Activated CD4-positive, alpha-beta T cell treated with anti-CD3 and anti-CD28 coated beads, Interleukin-2, amount 10 ng/mL, durations not matched to agents 24 days and 14 days (primary cell): ENCODE measurements at regions of chr1 and their contacts with region 1.

Region 1: DNA sequence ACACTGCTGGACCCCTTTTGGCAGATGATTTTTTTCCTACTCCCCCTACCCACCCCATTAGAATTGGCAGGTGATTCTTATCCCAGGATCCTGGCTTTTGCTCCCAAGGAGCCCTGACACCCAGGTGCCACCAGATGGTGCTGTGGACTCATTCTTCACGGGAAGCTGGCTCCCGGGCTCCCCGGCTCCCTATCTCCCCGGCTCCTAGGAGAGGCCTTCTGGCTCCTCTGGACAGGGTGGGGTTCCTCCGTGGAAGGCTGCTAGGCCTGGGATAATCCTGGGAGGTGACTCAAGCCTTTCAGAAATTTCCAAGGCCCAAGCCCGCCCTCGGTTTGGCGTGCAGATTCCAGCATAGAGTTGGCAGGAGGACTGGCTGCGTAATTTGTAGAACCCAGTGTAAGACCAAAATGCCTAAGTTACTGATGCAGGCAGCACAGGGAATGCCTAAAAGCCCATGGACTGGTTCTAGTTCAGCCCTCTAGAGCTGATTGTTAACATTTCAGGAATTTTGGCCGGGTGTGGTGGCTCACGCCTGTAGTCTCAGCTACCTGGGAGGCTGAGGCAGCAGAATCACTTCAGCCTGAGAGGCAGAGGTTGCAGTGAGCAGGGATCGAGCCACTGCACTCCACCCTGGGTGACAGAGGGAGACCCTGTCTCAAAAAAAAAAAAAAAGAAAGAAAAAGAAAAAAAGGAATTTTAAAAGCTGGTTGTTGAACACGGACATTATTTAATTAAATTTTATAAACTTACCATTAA is 6.8 kb upstream of the BSDC1 start:
- DNase-seq: peak; percentile 85
- H3K4me3 Mint-ChIP-seq: no peak overlapping the region
- H3K27ac Mint-ChIP-seq: no peak overlapping the region
- H3K4me1 Mint-ChIP-seq: peaks cover 2% of the 10 kb centered on the region
- H3K27me3 Mint-ChIP-seq: peaks cover 6% of the 10 kb centered on the region

Region 2: DNA sequence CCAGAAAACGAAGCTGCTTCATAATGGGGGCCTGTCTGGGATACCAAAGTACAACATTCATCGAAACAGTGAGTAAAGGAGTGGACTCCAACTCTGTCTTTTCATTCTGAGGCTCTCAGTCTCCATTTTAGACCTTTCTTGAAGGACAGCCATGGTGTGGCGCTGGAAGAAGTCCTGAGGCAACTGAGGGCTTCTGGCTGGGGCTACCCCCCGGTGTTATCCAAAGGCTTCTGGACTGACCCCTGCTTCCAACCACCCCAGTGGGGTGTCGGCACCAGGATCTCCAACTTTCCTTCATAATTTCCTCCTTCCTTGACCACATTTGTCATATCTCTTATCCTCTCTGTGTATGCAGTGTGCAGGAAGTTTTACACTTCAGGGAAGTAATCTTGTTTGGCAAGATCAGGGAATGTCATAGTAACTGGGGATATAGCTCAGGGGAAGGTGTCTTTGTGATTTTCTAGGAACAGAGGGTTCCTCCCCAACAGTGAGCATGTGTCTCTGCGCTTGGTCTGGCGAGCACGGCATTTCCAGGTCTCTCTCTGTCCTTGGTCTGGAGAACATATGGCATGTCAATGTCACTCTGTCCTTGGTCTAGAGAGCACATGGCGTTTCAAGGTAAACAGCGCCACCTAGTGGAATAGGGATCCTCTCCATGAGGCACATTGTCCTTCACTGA is 12.6 kb after region 1 on chr1:
- intact Hi-C with region 1: loop called (anchors 1 kb)
- DNase-seq: peak; percentile 93
- H3K4me3 Mint-ChIP-seq: no peak overlapping the region
- H3K27ac Mint-ChIP-seq: peak overlapping the region; percentile 10
- H3K4me1 Mint-ChIP-seq: peaks cover 3% of the 10 kb centered on the region
- H3K27me3 Mint-ChIP-seq: peaks cover 26% of the 10 kb centered on the region